Activated B cell treated with CpG ODN at 0.5 μM for 24 hours (primary cell): ENCODE measurements at regions of chr19 and their contacts with region 1.

Region 1: DNA sequence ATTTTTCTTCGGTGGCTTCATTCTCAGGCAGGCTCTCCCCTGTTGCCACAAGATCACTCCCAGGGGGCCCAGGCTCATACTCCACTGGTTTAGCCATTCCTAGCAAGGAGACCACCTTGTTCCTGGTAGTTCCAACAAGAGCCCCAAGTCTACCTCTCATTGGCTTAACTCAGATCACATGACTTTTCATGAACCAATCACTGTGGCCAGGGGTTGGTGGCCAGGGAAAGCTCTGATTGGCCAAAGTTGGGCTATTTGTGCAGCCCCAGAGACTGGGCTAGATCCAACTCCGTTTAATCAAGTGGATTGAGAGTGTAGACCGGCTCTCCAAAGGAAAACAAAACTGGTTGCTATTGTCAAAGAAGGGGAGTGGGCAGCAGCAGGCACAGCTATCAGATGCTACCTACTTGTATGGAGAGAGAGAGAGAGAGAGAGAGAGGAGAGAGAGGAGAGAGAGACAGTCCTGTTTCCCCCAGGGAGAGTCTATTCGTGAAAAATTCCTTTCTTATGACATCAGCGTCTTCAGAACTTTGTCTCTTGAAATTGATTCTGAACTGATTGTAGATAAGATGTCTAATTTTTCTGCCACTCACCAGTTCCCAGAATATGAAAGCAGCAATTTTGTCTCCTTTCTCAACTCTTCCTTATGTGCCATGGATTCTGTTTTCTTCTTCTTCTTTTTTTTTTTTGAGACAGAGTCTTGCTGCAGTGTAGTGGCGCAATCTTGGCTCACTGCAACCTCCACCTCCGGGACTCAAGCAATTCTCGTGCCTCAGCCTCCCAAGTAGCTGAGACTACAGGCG is 5.9 kb downstream of the CEACAM19 start:
- DNase-seq: no peak
- ATAC-seq: no peak
- H3K4me3 Mint-ChIP-seq: no peak overlapping the region
- H3K27ac Mint-ChIP-seq: no peak overlapping the region
- H3K4me1 Mint-ChIP-seq: no peaks in the 10 kb centered on the region
- H3K27me3 Mint-ChIP-seq: peaks cover 6% of the 10 kb centered on the region
- CTCF ChIP-seq: no peak

Region 2: GRCh38 chr19:43777163-43777700 is 900.0 kb before region 1 on chr19:
- CTCF ChIA-PET with region 1: no interaction called
- POLR2A ChIA-PET with region 1: interaction called, 15 read pairs
- intact Hi-C with region 1: no loop called
- DNase-seq: no peak
- ATAC-seq: no peak
- H3K4me3 Mint-ChIP-seq: peak overlapping the region; percentile 88
- H3K27ac Mint-ChIP-seq: peak overlapping the region; percentile 94
- H3K4me1 Mint-ChIP-seq: peaks cover 68% of the 10 kb centered on the region
- H3K27me3 Mint-ChIP-seq: no peaks in the 10 kb centered on the region
- CTCF ChIP-seq: no peak

Region 3: DNA sequence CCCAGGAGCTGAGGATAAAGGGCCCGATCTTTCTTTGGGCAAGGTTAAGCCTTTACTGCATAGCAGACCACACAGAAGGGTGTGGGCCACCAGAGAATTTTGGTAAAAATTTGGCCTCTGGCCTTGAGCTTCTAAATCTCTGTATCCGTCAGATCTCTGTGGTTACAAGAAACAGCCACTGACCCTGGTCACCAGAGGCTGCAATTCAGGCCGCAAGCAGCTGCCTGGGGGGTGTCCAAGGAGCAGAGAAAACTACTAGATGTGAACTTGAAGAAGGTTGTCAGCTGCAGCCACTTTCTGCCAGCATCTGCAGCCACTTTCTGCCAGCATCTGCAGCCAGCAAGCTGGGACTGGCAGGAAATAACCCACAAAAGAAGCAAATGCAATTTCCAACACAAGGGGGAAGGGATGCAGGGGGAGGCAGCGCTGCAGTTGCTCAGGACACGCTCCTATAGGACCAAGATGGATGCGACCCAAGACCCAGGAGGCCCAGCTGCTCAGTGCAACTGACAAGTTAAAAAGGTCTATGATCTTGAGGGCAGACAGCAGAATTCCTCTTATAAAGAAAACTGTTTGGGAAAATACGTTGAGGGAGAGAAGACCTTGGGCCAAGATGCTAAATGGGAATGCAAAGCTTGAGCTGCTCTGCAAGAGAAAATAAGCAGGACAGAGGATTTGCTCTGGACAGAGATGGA is 14.4 kb before region 1 on chr19:
- CTCF ChIA-PET with region 1: no interaction called
- POLR2A ChIA-PET with region 1: no interaction called
- intact Hi-C with region 1: no loop called
- DNase-seq: no peak
- ATAC-seq: no peak
- H3K4me3 Mint-ChIP-seq: no peak overlapping the region
- H3K27ac Mint-ChIP-seq: no peak overlapping the region
- H3K4me1 Mint-ChIP-seq: no peaks in the 10 kb centered on the region
- H3K27me3 Mint-ChIP-seq: peaks cover 2% of the 10 kb centered on the region
- CTCF ChIP-seq: no peak

Region 4: GRCh38 chr19:44723952-44724319 is 46.7 kb after region 1 on chr19:
- CTCF ChIA-PET with region 1: no interaction called
- POLR2A ChIA-PET with region 1: no interaction called
- intact Hi-C with region 1: no loop called
- DNase-seq: peak; percentile 76
- ATAC-seq: peak; percentile 92
- H3K4me3 Mint-ChIP-seq: no peak overlapping the region
- H3K27ac Mint-ChIP-seq: no peak overlapping the region
- H3K4me1 Mint-ChIP-seq: peaks cover 40% of the 10 kb centered on the region
- H3K27me3 Mint-ChIP-seq: peaks cover 3% of the 10 kb centered on the region
- CTCF ChIP-seq: peak; percentile 81